ENCODE measurements at regions of chr18 and their contacts with region 1.

Region 1: GRCh38 chr18:3281456-3282400 is 19.8 kb downstream of the MYL12B start:
- DNase-seq: no peak
- H3K4me3 Mint-ChIP-seq: no peak overlapping the region
- H3K27ac Mint-ChIP-seq: no peak overlapping the region
- H3K4me1 Mint-ChIP-seq: peaks cover 5% of the 10 kb centered on the region
- H3K27me3 Mint-ChIP-seq: peaks cover 2% of the 10 kb centered on the region

Region 2: GRCh38 chr18:2687390-2688001 is 594.2 kb before region 1 on chr18:
- intact Hi-C with region 1: no loop called
- DNase-seq: no peak
- H3K4me3 Mint-ChIP-seq: peak overlapping the region; percentile 11
- H3K27ac Mint-ChIP-seq: peak overlapping the region; percentile 92
- H3K4me1 Mint-ChIP-seq: peaks cover 64% of the 10 kb centered on the region
- H3K27me3 Mint-ChIP-seq: no peaks in the 10 kb centered on the region

Region 3: GRCh38 chr18:2978646-2979045 is 303.1 kb before region 1 on chr18:
- intact Hi-C with region 1: no loop called
- DNase-seq: no peak
- H3K4me3 Mint-ChIP-seq: peak overlapping the region; percentile 71
- H3K27ac Mint-ChIP-seq: peak overlapping the region; percentile 89
- H3K4me1 Mint-ChIP-seq: peaks cover 90% of the 10 kb centered on the region
- H3K27me3 Mint-ChIP-seq: no peaks in the 10 kb centered on the region

Region 4: GRCh38 chr18:3261371-3262246 is 20.1 kb before region 1 on chr18 and contains the start of gene MYL12B:
- intact Hi-C with region 1: no loop called
- DNase-seq: peak; percentile 75
- H3K4me3 Mint-ChIP-seq: peak within 1 kb of the TSS; percentile 93
- H3K27ac Mint-ChIP-seq: peak within 1 kb of the TSS; percentile 98
- H3K4me1 Mint-ChIP-seq: peaks cover 82% of the 10 kb centered on the region
- H3K27me3 Mint-ChIP-seq: no peaks in the 10 kb centered on the region
- total RNA-seq, gene MYL12B: 234 and 235 TPM in 2 replicates

Region 5: GRCh38 chr18:3321133-3321812 is 39.5 kb after region 1 on chr18:
- intact Hi-C with region 1: loop called (anchors 2 kb)
- DNase-seq: no peak
- H3K4me3 Mint-ChIP-seq: no peak overlapping the region
- H3K27ac Mint-ChIP-seq: no peak overlapping the region
- H3K4me1 Mint-ChIP-seq: peaks cover 12% of the 10 kb centered on the region
- H3K27me3 Mint-ChIP-seq: peaks cover 6% of the 10 kb centered on the region

Region 6: DNA sequence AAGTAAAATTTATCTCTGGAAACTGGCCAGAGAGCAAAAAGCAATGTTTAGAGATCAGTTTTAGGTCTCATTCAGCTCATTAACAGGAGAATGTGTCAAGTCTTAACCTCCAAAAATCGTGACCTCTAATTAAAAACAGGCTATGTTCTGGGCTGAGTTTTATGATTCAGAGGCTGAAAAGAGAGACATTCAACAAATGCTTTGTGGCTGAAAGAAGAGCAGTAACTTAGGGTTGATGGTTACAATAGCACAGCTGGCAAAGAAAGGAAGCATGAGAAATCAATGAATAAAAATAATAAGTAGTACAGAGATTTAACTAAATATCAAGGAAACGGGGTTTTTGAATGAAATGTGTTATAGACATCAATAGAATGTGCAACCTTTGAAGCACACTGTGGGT is 181.3 kb after region 1 on chr18:
- intact Hi-C with region 1: no loop called
- DNase-seq: no peak
- H3K4me3 Mint-ChIP-seq: no peak overlapping the region
- H3K27ac Mint-ChIP-seq: no peak overlapping the region
- H3K4me1 Mint-ChIP-seq: peaks cover 36% of the 10 kb centered on the region
- H3K27me3 Mint-ChIP-seq: no peaks in the 10 kb centered on the region

Region 7: DNA sequence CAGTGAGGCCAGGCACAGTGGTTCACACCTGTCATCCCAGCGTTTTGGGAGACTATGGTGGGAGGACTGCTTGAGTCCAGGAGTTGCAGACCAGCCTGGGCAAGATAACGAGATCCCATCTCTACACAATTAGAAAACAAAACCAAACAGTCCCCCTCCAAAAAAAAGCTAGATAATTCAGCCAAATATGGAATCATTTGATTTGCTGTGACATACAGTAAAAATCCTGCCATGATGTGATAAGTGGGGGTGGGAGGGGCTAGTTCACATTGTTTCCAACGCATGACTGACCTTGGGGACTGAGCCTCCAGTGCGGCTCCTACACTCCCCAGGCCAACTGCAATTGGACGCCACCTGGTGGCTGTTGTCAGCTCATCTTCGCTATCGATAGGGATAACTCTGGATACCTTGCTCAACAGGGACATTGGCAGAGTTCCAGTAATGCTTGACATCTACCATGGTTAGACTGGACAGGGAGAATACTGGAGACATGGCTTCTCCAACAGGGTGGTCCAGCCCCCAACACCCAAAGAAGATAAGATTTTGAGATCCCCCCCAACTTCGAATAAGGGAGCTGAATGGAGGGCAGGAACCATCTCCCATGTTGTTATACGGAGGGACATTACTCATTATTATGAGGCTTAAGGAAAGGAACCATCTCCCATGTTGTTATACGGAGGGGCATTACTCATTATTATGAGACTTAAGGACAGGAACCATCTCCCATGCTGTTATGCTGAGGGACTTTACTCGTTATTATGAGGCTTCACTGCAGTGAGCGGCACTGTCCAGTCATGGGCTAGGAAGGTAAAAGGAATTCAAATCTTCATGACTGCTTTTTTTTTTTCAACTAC is 304.2 kb after region 1 on chr18:
- intact Hi-C with region 1: loop called (anchors 1 kb)
- DNase-seq: peak; percentile 54
- H3K4me3 Mint-ChIP-seq: no peak overlapping the region
- H3K27ac Mint-ChIP-seq: peak overlapping the region; percentile 69
- H3K4me1 Mint-ChIP-seq: peaks cover 46% of the 10 kb centered on the region
- H3K27me3 Mint-ChIP-seq: peaks cover 3% of the 10 kb centered on the region

Region 8: DNA sequence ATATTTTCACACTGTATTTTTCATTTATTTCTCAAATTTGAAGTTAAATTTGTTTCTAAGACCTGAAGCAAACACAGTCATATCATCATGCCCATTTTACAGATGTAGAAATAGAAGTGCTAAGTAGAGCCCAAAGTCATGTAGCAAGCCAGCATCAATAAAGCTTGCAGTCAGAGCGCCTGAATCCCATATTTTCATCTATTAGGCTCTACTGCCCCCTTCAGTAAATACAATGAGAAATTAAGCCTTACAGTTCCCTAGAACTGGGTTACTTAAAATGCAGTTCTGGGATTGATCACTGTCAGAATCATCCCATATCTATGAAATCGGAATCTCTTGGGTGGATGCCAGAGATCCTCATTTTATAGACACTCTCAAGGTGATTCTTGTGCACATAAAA is 588.1 kb after region 1 on chr18:
- intact Hi-C with region 1: loop called (anchors 10 kb)
- DNase-seq: no peak
- H3K4me3 Mint-ChIP-seq: no peak overlapping the region
- H3K27ac Mint-ChIP-seq: no peak overlapping the region
- H3K4me1 Mint-ChIP-seq: no peaks in the 10 kb centered on the region
- H3K27me3 Mint-ChIP-seq: peaks cover 25% of the 10 kb centered on the region

Measured in activated T-helper 1 cell treated with anti-CD3 and anti-CD28 coated beads, Interleukin-12 subunit alpha, Interleukin-12 subunit beta, Interleukin-2, Interleukin-4 antibody, amounts not matched to agents 30 ng/mL and 10 ng/mL and 1 ng/mL, durations not matched to agents 14 hours and 24 hours and 36 hours (primary cell).